Lower lobe of right lung (tissue), 2 donors: ENCODE measurements at regions of chr7 and their contacts with region 1.

Region 1: GRCh38 chr7:51366930-51367613 is 50.5 kb upstream of the COBL start:
- DNase-seq: no peak
- ATAC-seq: peak; percentile 87 to 89
- H3K4me3 ChIP-seq: no peak overlapping the region
- H3K27ac ChIP-seq: no peak overlapping the region
- H3K4me1 ChIP-seq: no peaks in the 10 kb centered on the region
- H3K27me3 ChIP-seq: no peaks in the 10 kb centered on the region
- CTCF ChIP-seq: peak; percentile 68

Region 2: GRCh38 chr7:51162724-51163329 is 204.2 kb before region 1 on chr7:
- intact Hi-C with region 1: loop called (anchors 5 kb)
- DNase-seq: no peak
- ATAC-seq: peak; percentile 91 to 93
- H3K4me3 ChIP-seq: no peak overlapping the region
- H3K27ac ChIP-seq: no peak overlapping the region
- H3K4me1 ChIP-seq: no peaks in the 10 kb centered on the region
- H3K27me3 ChIP-seq: no peaks in the 10 kb centered on the region
- CTCF ChIP-seq: peak; percentile 81